ENCODE measurements at regions of chr9 and their contacts with region 1.

Region 1: DNA sequence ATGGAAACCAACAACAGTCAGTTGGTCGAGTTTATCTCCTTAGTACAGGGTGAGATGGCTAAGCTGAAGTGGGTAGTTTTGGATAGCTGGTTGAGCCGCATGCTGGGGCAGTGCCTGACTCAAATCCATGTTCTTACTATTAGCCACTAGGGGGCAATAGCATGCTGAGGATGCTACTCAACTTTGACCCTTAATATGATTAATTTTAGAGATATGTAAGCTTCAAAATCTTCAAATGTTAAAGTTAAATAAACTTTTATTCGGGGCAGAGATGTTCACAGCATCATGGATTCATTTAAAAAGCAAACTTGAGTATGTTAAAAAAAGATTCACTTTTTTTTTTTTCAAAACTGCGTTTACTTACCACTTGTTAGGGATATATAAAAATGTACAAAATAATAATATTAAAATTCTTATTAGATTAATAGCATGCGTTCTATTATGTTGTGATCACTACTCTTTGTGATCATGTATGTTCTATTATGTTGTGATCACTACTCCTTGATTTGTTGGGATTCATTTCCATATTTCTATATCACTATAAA is 57.0 kb downstream of the C9orf153 start:
- DNase-seq: peak; percentile 56
- H3K4me3 ChIP-seq: peak overlapping the region in 1 of 2 experiments; percentile 22; a peak in 1 of 4 replicates
- H3K27ac ChIP-seq: no peak overlapping the region
- H3K4me1 ChIP-seq: peaks cover 0 to 3% of the 10 kb centered on the region in 2 experiments; a peak in 1 of 4 replicates
- H3K27me3 ChIP-seq: no peaks in the 10 kb centered on the region
- CTCF ChIP-seq: peak; percentile 89
- EP300 ChIP-seq: no peak
- RAD21 ChIP-seq: peak; percentile 79

Region 2: GRCh38 chr9:86098824-86099700 is 103.3 kb before region 1 on chr9 and contains the start of gene GOLM1:
- CTCF ChIA-PET with region 1: interaction called, 11 read pairs
- POLR2A ChIA-PET with region 1: no interaction called
- DNase-seq: peak; percentile 93
- H3K4me3 ChIP-seq: peak within 1 kb of the TSS; percentile 85 to 90
- H3K27ac ChIP-seq: peak within 1 kb of the TSS; percentile 35 to 82
- H3K4me1 ChIP-seq: peaks cover 0 to 14% of the 10 kb centered on the region in 2 experiments; a peak in 2 of 4 replicates
- H3K27me3 ChIP-seq: no peaks in the 10 kb centered on the region
- CTCF ChIP-seq: no peak; the same call in 1 of the 2 replicates
- EP300 ChIP-seq: no peak
- RAD21 ChIP-seq: no peak
- polyA plus RNA-seq, gene GOLM1: 69.8 and 83.2 TPM in 2 replicates

Region 3: GRCh38 chr9:86187121-86187520 is 15.3 kb before region 1 on chr9:
- CTCF ChIA-PET with region 1: interaction called, 16 read pairs
- POLR2A ChIA-PET with region 1: no interaction called
- DNase-seq: no peak
- H3K4me3 ChIP-seq: no peak overlapping the region
- H3K27ac ChIP-seq: no peak overlapping the region
- H3K4me1 ChIP-seq: no peaks in the 10 kb centered on the region
- H3K27me3 ChIP-seq: no peaks in the 10 kb centered on the region
- CTCF ChIP-seq: no peak
- EP300 ChIP-seq: no peak
- RAD21 ChIP-seq: no peak

Region 4: GRCh38 chr9:86222667-86223066 is 20.3 kb after region 1 on chr9:
- CTCF ChIA-PET with region 1: interaction called, 11 read pairs
- POLR2A ChIA-PET with region 1: no interaction called
- DNase-seq: no peak
- H3K4me3 ChIP-seq: no peak overlapping the region
- H3K27ac ChIP-seq: no peak overlapping the region
- H3K4me1 ChIP-seq: no peaks in the 10 kb centered on the region
- H3K27me3 ChIP-seq: no peaks in the 10 kb centered on the region
- CTCF ChIP-seq: no peak
- EP300 ChIP-seq: no peak
- RAD21 ChIP-seq: no peak

Region 5: GRCh38 chr9:86275962-86276361 is 73.6 kb after region 1 on chr9:
- CTCF ChIA-PET with region 1: interaction called, 17 read pairs
- POLR2A ChIA-PET with region 1: no interaction called
- DNase-seq: no peak
- H3K4me3 ChIP-seq: no peak overlapping the region
- H3K27ac ChIP-seq: no peak overlapping the region
- H3K4me1 ChIP-seq: peaks cover 7 to 15% of the 10 kb centered on the region in 2 experiments; a peak in 3 of 4 replicates
- H3K27me3 ChIP-seq: no peaks in the 10 kb centered on the region
- CTCF ChIP-seq: peak; percentile 34
- EP300 ChIP-seq: no peak
- RAD21 ChIP-seq: peak; percentile 57

Measured in SK-N-SH (cell line).